ENCODE measurements at regions of chr9 and their contacts with region 1.

Region 1: DNA sequence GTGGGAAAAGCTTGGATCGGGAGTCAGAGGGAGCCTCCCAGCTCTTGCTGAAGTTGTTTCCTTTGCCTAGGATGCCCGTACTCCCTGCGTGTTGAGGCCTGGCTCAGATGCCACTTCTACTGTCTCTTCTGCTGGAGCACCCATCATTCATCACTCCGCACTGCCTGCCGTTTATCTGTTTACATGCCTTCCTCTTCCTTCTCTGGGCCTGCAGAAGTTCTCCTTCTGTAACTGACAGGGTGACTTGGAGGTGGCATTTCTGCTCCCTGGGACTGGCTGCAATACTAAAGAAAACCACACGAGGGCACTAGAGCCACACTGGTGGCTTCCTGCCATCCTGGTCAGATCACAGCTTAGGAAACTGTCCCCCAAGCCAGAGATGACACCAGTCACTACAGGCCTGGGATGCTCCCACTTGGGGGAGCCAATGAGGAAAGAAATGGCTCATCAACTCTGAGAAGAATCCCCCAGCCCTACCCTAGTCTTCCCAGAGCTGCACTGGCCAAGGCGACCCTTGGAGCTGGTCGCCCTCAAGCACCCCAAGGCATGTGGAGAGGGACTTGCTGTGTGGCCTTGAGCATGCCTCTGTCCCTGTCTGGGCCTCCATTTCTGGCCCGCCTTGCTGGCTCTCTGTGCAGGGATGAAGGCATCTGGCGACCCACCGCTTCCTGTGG is 9.7 kb upstream of the SLC25A51 start:
- DNase-seq: no peak
- H3K4me3 ChIP-seq: no peak overlapping the region
- H3K27ac ChIP-seq: no peak overlapping the region
- H3K27me3 ChIP-seq: no peaks in the 10 kb centered on the region
- CTCF ChIP-seq: peak; percentile 99

Region 2: DNA sequence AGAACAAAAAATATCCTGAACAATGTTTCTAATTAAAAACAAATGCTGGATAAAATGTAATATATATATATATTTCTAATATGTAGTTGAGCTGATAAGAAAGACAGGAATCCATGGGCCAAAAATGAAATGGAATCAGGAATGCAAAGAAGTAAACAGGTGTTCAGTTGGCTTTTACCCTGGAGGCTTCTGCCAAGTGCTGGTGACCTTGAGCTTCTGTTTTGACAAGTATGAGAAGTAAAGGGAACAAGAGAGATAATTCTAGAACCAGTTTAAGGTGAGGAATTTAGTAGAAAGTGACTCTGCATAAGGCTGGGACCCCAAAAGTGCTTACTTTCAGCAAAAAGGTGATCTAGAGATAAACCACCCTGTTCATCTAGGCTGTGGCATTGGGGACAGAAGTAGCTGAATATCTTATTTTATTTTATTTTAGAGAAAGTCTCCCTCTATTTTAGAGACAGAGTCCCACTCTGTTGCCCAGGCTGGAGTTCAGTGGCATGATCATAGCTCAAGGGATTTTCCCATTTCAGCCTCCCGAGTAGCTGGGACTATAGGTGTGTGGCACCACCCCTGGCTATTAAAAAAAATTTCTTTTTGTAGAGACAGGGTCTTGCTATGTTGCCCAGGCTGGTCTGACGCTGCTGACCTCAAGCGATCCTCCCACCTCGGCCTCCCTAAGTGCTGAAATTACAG is 86.0 kb before region 1 on chr9:
- CTCF ChIA-PET with region 1: no interaction called
- POLR2A ChIA-PET with region 1: no interaction called
- DNase-seq: no peak
- H3K4me3 ChIP-seq: no peak overlapping the region
- H3K27ac ChIP-seq: no peak overlapping the region
- H3K27me3 ChIP-seq: no peaks in the 10 kb centered on the region
- CTCF ChIP-seq: no peak

Region 3: GRCh38 chr9:38003230-38003629 is 89.6 kb after region 1 on chr9:
- CTCF ChIA-PET with region 1: no interaction called
- POLR2A ChIA-PET with region 1: no interaction called
- DNase-seq: no peak
- H3K4me3 ChIP-seq: no peak overlapping the region
- H3K27ac ChIP-seq: no peak overlapping the region
- H3K27me3 ChIP-seq: no peaks in the 10 kb centered on the region
- CTCF ChIP-seq: no peak

Region 4: DNA sequence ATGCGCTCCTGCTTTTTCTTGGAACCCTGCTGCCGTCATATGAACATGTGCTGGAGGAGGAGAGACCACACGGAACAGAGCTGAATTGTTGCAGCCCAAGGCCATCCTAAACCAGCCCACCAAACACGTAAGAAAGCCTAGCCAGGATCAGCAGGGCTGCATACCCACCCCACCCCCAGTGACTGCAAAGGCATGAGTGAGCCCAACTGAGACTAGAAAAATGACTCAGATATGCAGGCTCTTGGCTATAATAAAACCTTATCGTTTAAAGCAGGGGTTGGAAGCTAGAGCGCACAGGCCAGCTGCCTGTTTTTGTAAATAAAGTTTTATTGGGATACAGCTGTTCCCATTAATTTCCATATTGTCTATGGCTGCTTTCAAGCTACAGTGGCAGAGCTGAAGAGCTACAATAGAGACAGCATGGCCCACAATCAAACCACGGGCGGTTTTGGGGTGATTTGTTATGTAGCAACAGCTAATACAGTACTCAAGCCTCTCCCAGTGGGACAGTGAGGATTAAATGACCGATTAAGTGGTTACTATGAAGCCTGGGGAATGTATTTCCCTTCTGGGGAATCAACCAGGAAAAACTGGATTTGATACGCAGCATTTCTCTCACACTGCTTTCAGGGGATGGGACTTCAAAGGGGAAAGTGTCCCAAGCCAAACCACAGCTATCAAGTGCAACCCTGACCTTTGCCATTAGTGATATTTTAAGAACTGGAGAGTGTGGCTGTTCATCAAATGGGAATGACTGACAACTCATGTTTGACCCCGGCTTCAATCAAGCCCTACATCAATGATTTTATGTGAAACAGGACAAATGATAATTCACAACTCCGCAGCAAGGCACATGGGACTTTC is 149.1 kb after region 1 on chr9:
- CTCF ChIA-PET with region 1: interaction called, 11 read pairs
- POLR2A ChIA-PET with region 1: no interaction called
- DNase-seq: peak; percentile 29
- H3K4me3 ChIP-seq: peak overlapping the region; percentile 29; the same call in 1 of the 2 replicates
- H3K27ac ChIP-seq: peak overlapping the region; percentile 47
- H3K27me3 ChIP-seq: no peaks in the 10 kb centered on the region
- CTCF ChIP-seq: no peak

Region 5: DNA sequence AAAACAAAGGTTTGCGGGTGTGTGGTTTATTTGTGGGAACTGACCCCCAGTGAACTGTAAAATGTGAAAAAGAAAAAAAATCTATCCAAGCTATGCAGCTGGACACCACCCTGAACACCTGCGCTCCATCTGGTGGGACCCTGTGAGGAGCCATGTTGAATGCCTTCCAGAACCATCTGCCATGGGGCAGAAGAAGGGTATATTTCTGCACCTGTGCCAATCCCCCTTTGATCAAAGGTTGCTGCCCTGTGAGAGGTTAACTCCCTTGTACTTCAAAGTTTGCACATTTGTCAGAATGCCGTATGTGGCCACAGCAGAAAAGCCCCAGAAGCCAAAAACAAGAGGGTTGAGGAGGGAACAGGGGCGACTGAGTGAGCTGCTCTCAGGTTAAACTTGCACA is 330.4 kb after region 1 on chr9:
- CTCF ChIA-PET with region 1: no interaction called
- POLR2A ChIA-PET with region 1: no interaction called
- DNase-seq: no peak
- H3K4me3 ChIP-seq: no peak overlapping the region
- H3K27ac ChIP-seq: no peak overlapping the region
- H3K27me3 ChIP-seq: peaks cover 10% of the 10 kb centered on the region
- CTCF ChIP-seq: no peak

Region 6: DNA sequence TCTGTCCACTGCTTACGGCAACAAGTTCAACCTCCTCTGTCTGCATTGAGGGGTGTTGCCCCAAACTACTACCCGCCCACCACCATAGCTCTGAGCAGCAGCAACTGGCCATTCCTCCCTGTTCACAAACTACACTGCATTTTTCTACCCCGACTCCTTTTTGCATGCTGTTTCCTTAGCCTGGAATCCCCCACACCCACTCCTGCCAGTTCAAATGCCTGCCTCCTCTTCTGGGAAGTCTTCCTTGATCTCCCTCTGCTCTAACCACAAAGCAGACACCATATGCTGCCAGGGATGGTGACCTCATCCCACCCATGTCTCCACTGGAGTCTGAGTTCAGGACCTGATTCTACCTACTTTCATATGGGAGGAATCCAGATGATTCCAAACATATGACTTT is 492.2 kb after region 1 on chr9:
- CTCF ChIA-PET with region 1: interaction called, 11 read pairs
- POLR2A ChIA-PET with region 1: no interaction called
- DNase-seq: no peak
- H3K4me3 ChIP-seq: no peak overlapping the region
- H3K27ac ChIP-seq: no peak overlapping the region
- H3K27me3 ChIP-seq: peaks cover 44% of the 10 kb centered on the region
- CTCF ChIP-seq: no peak

Region 7: GRCh38 chr9:38761334-38761733 is 847.7 kb after region 1 on chr9:
- CTCF ChIA-PET with region 1: no interaction called
- POLR2A ChIA-PET with region 1: no interaction called
- DNase-seq: no peak
- H3K4me3 ChIP-seq: no peak overlapping the region
- H3K27ac ChIP-seq: no peak overlapping the region
- H3K27me3 ChIP-seq: no peaks in the 10 kb centered on the region
- CTCF ChIP-seq: no peak

Measured in AG04450 (cell line).